GM12878 (cell line): ENCODE measurements at regions of chr10 and their contacts with region 1.

Region 1: GRCh38 chr10:103111031-103111917 is 81.8 kb downstream of the NT5C2 start:
- DNase-seq: peak; percentile 81
- ATAC-seq: peak; percentile 74
- H3K4me3 ChIP-seq: peak overlapping the region; percentile 25; the same call in 1 of the 2 replicates
- H3K27ac ChIP-seq: peak overlapping the region; percentile 59
- H3K4me1 ChIP-seq: peaks cover 39% of the 10 kb centered on the region
- H3K27me3 ChIP-seq: no peaks in the 10 kb centered on the region
- CTCF ChIP-seq: no peak
- EP300 ChIP-seq: peak; percentile 57 to 84; a peak in 3 of 4 replicates
- POLR2A ChIP-seq: no peak
- RAD21 ChIP-seq: no peak

Region 2: DNA sequence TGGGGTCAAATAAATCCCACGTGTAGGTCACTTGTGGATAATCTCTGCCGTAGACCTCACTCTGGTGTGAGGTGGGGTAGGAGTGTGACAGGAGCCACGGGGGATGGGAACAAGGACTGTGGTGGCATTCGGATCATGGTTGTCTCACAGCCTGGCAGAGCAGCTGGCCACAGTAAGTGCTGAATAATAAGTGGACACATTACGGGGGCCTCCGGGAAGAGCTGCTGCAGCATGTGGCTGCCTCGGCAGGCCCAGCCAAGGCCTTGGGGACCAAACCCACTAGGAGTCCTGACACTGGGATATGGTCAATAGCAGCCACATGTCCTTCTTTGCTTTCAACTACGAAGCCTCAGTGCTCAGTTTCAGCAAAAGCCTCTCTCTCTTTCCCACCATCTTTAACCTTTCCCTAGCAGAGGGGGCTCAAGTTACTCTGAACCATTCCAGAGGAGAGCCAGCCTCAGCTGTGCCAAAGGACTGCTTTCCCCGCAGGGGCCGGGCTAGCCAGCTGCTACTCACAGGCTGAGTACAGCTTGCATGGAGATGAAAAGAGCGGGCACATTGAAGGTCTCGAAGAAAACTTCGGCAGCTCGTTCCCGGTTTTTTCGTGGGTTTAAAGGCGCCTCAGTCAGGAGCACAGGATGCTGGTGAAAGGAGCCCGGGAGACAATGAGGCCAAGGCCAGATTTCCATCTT is 626.0 kb before region 1 on chr10:
- CTCF ChIA-PET with region 1: no interaction called
- POLR2A ChIA-PET with region 1: no interaction called
- RAD21 ChIA-PET with region 1: no interaction called
- SMC1A ChIA-PET with region 1: no interaction called
- in situ Hi-C with region 1: no loop called
- intact Hi-C with region 1: no loop called
- DNase-seq: no peak
- ATAC-seq: no peak
- H3K4me3 ChIP-seq: no peak overlapping the region
- H3K27ac ChIP-seq: no peak overlapping the region
- H3K4me1 ChIP-seq: no peaks in the 10 kb centered on the region
- H3K27me3 ChIP-seq: no peaks in the 10 kb centered on the region
- CTCF ChIP-seq: no peak
- EP300 ChIP-seq: no peak
- POLR2A ChIP-seq: no peak
- RAD21 ChIP-seq: no peak

Region 3: GRCh38 chr10:103069453-103070331 is 41.6 kb before region 1 on chr10:
- CTCF ChIA-PET with region 1: interaction called, 6 read pairs
- POLR2A ChIA-PET with region 1: no interaction called
- RAD21 ChIA-PET with region 1: interaction called, 7 read pairs
- SMC1A ChIA-PET with region 1: interaction called, 22 read pairs
- in situ Hi-C with region 1: no loop called
- intact Hi-C with region 1: no loop called
- DNase-seq: peak; percentile 46
- ATAC-seq: peak; percentile 87
- H3K4me3 ChIP-seq: 0 out of 2 replicates have a peak overlapping the region, but pooled peaks have one; percentile 2
- H3K27ac ChIP-seq: peak overlapping the region; percentile 73
- H3K4me1 ChIP-seq: peaks cover 37% of the 10 kb centered on the region
- H3K27me3 ChIP-seq: no peaks in the 10 kb centered on the region
- CTCF ChIP-seq: peak; percentile 69 to 82 (median 70)
- EP300 ChIP-seq: no peak
- POLR2A ChIP-seq: no peak
- RAD21 ChIP-seq: peak; percentile 88

Region 4: DNA sequence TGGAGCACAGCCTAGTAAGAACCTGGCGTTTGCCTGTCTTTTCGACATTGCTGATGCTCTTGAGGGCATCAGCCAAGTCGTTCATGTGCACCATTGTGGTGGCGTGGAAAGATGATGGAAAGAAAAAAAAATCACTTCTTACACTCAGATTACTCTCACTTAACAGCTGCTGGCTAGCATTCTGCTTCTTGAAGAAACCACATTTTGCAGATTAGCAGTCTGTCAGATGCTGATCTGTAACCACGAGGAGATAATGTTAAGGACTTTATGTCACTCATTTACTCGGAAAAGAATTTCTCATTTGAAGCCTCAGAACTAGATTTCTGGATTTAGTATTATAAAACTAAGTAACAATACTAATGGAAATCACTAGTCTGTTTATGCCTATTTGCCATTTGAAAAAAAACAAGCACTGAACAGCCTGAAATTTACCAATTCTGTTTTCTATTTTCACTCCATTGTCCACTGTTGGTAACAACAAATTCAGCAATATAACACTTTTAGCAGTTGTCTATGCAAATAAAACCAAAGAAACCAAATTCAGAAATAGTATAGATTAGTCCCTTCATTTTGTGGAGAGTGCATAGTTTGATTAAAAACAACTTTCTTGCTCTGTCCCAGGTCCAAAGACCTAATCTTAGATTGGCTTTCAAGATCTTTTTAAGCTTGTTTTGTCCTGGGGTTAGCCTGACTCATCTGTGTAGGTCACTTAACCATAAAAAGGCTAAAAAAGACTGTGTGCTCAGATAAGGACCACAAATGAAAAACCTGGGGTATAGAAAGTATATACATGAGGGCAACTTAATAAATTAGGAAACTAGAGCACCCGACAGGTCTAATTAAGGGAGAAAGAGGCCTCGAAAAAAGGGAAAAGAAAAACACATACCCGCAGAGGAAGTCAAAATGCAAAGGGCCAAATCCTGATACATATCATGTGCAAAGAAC is 14.3 kb after region 1 on chr10:
- CTCF ChIA-PET with region 1: interaction called, 15 read pairs
- POLR2A ChIA-PET with region 1: interaction called, 31 read pairs
- RAD21 ChIA-PET with region 1: interaction called, 67 read pairs
- SMC1A ChIA-PET with region 1: interaction called, 49 read pairs
- in situ Hi-C with region 1: no loop called
- intact Hi-C with region 1: loop called (anchors 1 kb)
- DNase-seq: peak; percentile 87
- ATAC-seq: peak; percentile 96
- H3K4me3 ChIP-seq: peak overlapping the region; percentile 21
- H3K27ac ChIP-seq: peak overlapping the region; percentile 67
- H3K4me1 ChIP-seq: peaks cover 17% of the 10 kb centered on the region
- H3K27me3 ChIP-seq: no peaks in the 10 kb centered on the region
- CTCF ChIP-seq: no peak
- EP300 ChIP-seq: peak; percentile 89 to 90
- POLR2A ChIP-seq: no peak
- RAD21 ChIP-seq: no peak

Region 5: GRCh38 chr10:103153302-103154197 is 42.3 kb after region 1 on chr10:
- CTCF ChIA-PET with region 1: no interaction called
- POLR2A ChIA-PET with region 1: no interaction called
- RAD21 ChIA-PET with region 1: no interaction called
- SMC1A ChIA-PET with region 1: interaction called, 16 read pairs
- in situ Hi-C with region 1: no loop called
- intact Hi-C with region 1: no loop called
- DNase-seq: no peak
- ATAC-seq: no peak
- H3K4me3 ChIP-seq: no peak overlapping the region
- H3K27ac ChIP-seq: no peak overlapping the region
- H3K4me1 ChIP-seq: no peaks in the 10 kb centered on the region
- H3K27me3 ChIP-seq: no peaks in the 10 kb centered on the region
- CTCF ChIP-seq: no peak
- EP300 ChIP-seq: no peak
- POLR2A ChIP-seq: no peak
- RAD21 ChIP-seq: no peak

Region 6: GRCh38 chr10:103175580-103176285 is 64.5 kb after region 1 on chr10:
- CTCF ChIA-PET with region 1: interaction called, 3 read pairs
- POLR2A ChIA-PET with region 1: no interaction called
- RAD21 ChIA-PET with region 1: interaction called, 4 read pairs
- SMC1A ChIA-PET with region 1: interaction called, 12 read pairs
- in situ Hi-C with region 1: no loop called
- intact Hi-C with region 1: no loop called
- DNase-seq: no peak
- ATAC-seq: no peak
- H3K4me3 ChIP-seq: no peak overlapping the region
- H3K27ac ChIP-seq: no peak overlapping the region
- H3K4me1 ChIP-seq: no peaks in the 10 kb centered on the region
- H3K27me3 ChIP-seq: no peaks in the 10 kb centered on the region
- CTCF ChIP-seq: no peak
- EP300 ChIP-seq: no peak
- POLR2A ChIP-seq: 0 out of 2 replicates have a peak, but pooled peaks have one; percentile 6
- RAD21 ChIP-seq: no peak

Region 7: DNA sequence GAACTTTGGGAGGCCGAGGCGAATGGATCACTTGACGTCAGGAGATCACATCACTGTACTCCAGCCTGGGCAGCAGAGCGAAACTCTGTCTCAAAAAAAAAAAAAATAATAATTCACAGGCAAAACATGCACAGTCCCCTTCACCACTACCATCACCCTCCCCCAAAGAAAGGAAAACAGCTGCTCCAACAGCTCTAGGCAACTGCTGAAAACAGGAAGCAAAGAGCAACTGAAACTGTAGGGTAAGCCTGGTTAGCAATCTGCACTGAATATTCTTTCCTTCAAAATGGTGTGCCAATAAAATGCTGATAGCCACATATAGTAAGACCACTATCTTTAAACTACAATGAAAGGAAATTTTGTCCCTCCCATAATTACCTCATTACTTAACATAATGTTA is 70.0 kb after region 1 on chr10:
- CTCF ChIA-PET with region 1: interaction called, 3 read pairs
- POLR2A ChIA-PET with region 1: interaction called, 4 read pairs
- RAD21 ChIA-PET with region 1: interaction called, 4 read pairs
- SMC1A ChIA-PET with region 1: interaction called, 12 read pairs
- in situ Hi-C with region 1: no loop called
- intact Hi-C with region 1: loop called (anchors 2 kb)
- DNase-seq: peak; percentile 45
- ATAC-seq: peak; percentile 83
- H3K4me3 ChIP-seq: no peak overlapping the region
- H3K27ac ChIP-seq: peak overlapping the region; percentile 63
- H3K4me1 ChIP-seq: peaks cover 14% of the 10 kb centered on the region
- H3K27me3 ChIP-seq: no peaks in the 10 kb centered on the region
- CTCF ChIP-seq: no peak
- EP300 ChIP-seq: peak in 1 of 2 experiments; percentile 44; a peak in 1 of 4 replicates
- POLR2A ChIP-seq: no peak
- RAD21 ChIP-seq: no peak

Region 8: GRCh38 chr10:103192451-103193106 is 81.3 kb after region 1 on chr10:
- CTCF ChIA-PET with region 1: interaction called, 5 read pairs
- POLR2A ChIA-PET with region 1: interaction called, 13 read pairs
- RAD21 ChIA-PET with region 1: interaction called, 25 read pairs
- SMC1A ChIA-PET with region 1: interaction called, 44 read pairs
- in situ Hi-C with region 1: no loop called
- intact Hi-C with region 1: loop called (anchors 2 kb)
- DNase-seq: no peak
- ATAC-seq: peak; percentile 82
- H3K4me3 ChIP-seq: peak overlapping the region; percentile 85
- H3K27ac ChIP-seq: peak overlapping the region; percentile 92
- H3K4me1 ChIP-seq: peaks cover 7% of the 10 kb centered on the region
- H3K27me3 ChIP-seq: no peaks in the 10 kb centered on the region
- CTCF ChIP-seq: no peak
- EP300 ChIP-seq: no peak
- POLR2A ChIP-seq: peak; percentile 71
- RAD21 ChIP-seq: no peak

Region 9: GRCh38 chr10:103295374-103296015 is 184.2 kb after region 1 on chr10:
- CTCF ChIA-PET with region 1: no interaction called
- POLR2A ChIA-PET with region 1: no interaction called
- RAD21 ChIA-PET with region 1: no interaction called
- SMC1A ChIA-PET with region 1: no interaction called
- in situ Hi-C with region 1: no loop called
- intact Hi-C with region 1: no loop called
- DNase-seq: no peak
- ATAC-seq: no peak
- H3K4me3 ChIP-seq: no peak overlapping the region
- H3K27ac ChIP-seq: no peak overlapping the region
- H3K4me1 ChIP-seq: no peaks in the 10 kb centered on the region
- H3K27me3 ChIP-seq: no peaks in the 10 kb centered on the region
- CTCF ChIP-seq: no peak
- EP300 ChIP-seq: no peak
- POLR2A ChIP-seq: no peak
- RAD21 ChIP-seq: no peak